Activated naive CD4-positive, alpha-beta T cell treated with anti-CD3 and anti-CD28 coated beads, Interleukin-2, amount 10 ng/mL, durations not matched to agents 7 days and 5 days (primary cell): ENCODE measurements at regions of chr21 and their contacts with region 1.

Region 1: GRCh38 chr21:41283211-41283818 is 33.3 kb upstream of the FAM3B start:
- DNase-seq: peak; percentile 63
- H3K4me3 Mint-ChIP-seq: no peak overlapping the region
- H3K27ac Mint-ChIP-seq: no peak overlapping the region
- H3K4me1 Mint-ChIP-seq: no peaks in the 10 kb centered on the region
- H3K27me3 Mint-ChIP-seq: peaks cover 41% of the 10 kb centered on the region

Region 2: GRCh38 chr21:41112740-41113692 is 170.3 kb before region 1 on chr21:
- CTCF ChIA-PET with region 1: no interaction called
- DNase-seq: peak; percentile 21
- H3K4me3 Mint-ChIP-seq: peak overlapping the region; percentile 41
- H3K27ac Mint-ChIP-seq: peak overlapping the region; percentile 77
- H3K4me1 Mint-ChIP-seq: peaks cover 22% of the 10 kb centered on the region
- H3K27me3 Mint-ChIP-seq: peaks cover 10% of the 10 kb centered on the region

Region 3: DNA sequence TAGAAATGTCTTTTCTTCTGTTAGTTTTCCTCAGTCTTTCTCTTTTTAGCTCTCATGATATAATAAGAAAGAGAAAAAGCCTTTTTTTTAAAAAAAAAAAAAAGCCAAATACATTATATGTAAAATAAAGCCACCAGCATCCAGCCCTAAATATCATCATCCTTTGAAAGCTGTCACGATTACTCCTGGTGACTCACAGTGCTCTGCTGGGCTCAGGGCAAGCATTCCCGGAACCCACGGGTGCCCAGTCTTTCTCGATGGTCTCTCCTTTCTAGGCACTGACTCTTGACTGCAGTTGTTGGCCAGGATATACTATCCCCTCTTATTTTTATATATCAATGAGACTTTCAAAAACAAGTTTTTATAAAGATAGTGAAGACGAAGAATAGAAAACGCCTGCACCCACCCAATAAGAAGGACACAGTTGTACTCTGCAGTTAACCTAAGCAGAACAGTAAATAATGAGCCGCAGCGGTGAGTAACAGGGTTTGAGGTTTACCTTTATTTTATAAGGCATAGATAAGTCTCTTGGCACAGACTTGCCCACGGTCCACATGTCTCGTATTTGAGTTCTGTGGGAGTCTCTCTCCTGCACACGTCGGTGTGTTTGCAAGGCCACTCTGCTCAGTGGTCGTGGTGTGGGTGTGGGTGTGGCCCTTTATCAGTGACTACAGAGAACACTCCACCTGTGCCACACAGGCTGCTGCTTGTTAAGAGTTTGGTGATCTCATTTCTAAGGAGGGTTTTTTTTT is 62.8 kb after region 1 on chr21:
- CTCF ChIA-PET with region 1: no interaction called
- DNase-seq: no peak
- H3K4me3 Mint-ChIP-seq: no peak overlapping the region
- H3K27ac Mint-ChIP-seq: no peak overlapping the region
- H3K4me1 Mint-ChIP-seq: no peaks in the 10 kb centered on the region
- H3K27me3 Mint-ChIP-seq: peaks cover 63% of the 10 kb centered on the region

Region 4: GRCh38 chr21:41369105-41369919 is 86.0 kb after region 1 on chr21:
- CTCF ChIA-PET with region 1: interaction called, 14 read pairs
- DNase-seq: peak; percentile 57
- H3K4me3 Mint-ChIP-seq: peak overlapping the region; percentile 81
- H3K27ac Mint-ChIP-seq: peak overlapping the region; percentile 96
- H3K4me1 Mint-ChIP-seq: peaks cover 70% of the 10 kb centered on the region
- H3K27me3 Mint-ChIP-seq: no peaks in the 10 kb centered on the region

Region 5: DNA sequence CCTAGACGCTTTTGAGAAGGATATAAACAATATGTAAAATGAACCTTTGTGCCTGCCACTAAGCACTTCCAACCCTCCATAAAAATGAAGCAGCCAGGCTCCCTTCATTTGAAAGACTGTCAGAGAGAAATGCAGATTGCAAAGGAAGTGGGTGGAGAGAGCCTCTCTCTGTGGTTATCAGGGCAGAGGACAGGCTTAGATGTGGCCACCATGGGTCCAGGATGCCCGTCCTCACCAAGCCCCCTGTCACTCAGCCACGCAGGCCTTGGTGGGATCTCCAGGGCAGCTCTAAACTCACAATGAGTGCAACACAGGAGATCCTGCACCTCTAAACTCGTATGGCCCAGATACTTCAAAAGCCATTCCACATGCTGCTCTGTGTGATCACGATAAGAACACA is 186.7 kb after region 1 on chr21:
- CTCF ChIA-PET with region 1: interaction called, 11 read pairs
- DNase-seq: no peak
- H3K4me3 Mint-ChIP-seq: no peak overlapping the region
- H3K27ac Mint-ChIP-seq: no peak overlapping the region
- H3K4me1 Mint-ChIP-seq: peaks cover 4% of the 10 kb centered on the region
- H3K27me3 Mint-ChIP-seq: peaks cover 36% of the 10 kb centered on the region

Region 6: DNA sequence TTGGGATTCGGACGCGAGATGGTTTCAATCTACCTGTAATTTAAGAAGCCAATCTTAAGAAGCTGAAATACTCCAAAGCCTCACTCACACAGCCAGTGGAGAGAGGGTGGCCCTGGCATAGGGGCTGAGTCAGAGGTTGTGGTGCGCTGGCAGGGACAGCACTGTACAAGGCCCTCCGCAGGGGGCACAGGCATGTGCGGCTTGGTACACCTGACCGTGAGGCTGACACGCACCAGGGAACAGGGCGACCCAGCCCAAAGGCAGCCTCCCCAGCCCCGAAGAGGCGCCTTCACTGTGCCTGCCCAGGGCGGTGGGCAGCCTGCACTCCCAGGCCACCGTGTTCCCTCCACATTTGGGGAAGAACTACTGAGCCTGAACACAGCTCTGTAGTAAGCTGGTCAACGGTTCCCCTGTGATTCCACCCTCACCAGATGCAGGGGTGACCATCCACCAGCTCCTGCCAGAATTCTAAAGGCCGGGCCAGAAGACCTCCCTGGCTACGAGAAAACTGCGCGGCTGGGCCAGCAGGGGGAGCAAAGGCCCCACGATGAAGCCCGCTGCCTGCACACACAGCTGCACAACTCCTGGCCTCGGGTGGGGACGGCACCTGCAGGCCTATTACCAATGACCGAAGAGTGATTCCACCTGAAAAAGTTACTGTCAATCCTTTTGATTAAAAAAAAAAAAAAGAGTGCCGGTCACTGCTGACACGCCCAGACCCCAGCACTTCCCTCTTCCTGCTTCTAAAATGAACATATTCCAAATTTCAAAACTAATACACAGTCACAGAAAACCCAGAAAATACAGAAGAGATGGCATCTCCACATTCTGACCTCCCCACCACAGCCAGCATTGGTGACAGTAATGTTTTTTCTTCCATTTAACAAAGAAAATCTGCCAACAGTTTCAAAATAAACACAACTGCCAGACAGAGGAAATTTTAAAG is 533.2 kb after region 1 on chr21:
- CTCF ChIA-PET with region 1: interaction called, 16 read pairs
- DNase-seq: peak; percentile 71
- H3K4me3 Mint-ChIP-seq: no peak overlapping the region
- H3K27ac Mint-ChIP-seq: no peak overlapping the region
- H3K4me1 Mint-ChIP-seq: peaks cover 3% of the 10 kb centered on the region
- H3K27me3 Mint-ChIP-seq: no peaks in the 10 kb centered on the region

Region 7: DNA sequence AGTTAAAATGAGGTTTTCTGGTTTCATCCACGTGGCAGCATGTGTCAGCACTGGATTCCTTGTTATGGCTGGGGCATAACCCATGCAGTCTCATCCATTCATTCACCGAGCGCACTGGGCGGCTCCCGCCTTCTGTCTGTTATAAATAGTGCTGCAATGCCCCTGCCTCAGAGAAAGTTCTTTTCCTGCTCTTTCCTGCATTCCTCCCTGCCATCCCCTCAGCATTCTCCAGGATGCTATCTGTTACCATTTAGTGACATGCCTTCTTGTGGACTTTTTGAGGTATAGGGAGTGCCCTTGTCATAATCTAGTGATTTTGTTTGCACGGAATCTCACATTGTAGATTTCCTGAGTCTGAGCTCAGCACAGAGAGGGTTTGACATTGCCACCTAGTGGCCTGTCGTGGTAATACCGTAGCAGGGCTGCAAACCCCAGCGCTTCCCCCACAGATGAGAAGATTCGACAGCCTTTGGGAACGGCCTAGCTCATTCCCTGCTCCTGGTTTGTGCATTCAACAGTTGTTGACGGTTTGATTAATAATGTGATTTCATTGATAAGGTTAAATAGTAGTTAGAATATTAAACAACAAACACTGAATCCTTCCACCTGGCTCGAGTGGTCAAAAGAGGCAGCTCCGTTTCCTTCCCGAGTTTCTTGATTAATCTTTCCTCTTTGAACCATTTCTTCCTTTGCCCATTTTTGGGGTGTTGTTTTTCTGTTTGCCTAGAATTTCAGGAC is 834.1 kb after region 1 on chr21:
- CTCF ChIA-PET with region 1: interaction called, 10 read pairs
- DNase-seq: peak; percentile 84
- H3K4me3 Mint-ChIP-seq: no peak overlapping the region
- H3K27ac Mint-ChIP-seq: no peak overlapping the region
- H3K4me1 Mint-ChIP-seq: peaks cover 37% of the 10 kb centered on the region
- H3K27me3 Mint-ChIP-seq: peaks cover 89% of the 10 kb centered on the region